ENCODE measurements at regions of chr7 and their contacts with region 1.

Region 1: DNA sequence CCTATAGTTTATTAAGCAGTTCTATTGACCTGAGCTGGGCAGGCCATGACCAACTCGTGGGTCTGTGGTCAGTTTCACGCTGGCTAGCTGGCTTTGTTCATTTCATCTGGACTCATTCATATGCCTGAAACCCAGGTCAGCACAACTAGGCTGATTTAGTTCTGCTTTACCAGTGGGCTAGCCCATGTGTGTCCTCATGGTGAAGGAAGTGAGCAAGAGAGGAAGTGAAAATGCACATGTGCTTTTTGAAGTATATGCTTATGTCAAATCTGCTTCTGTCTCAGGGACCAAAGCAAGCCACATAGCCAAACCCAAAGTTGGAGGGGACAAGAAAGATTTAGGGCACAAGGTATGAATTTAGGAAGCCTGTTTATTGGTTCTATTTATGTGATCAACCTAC is 154.5 kb downstream of the RNF133 start:
- DNase-seq: peak; percentile 49
- ATAC-seq: peak; percentile 99
- H3K4me3 ChIP-seq: no peak overlapping the region
- H3K27ac ChIP-seq: no peak overlapping the region
- H3K4me1 ChIP-seq: peaks cover 2% of the 10 kb centered on the region; the same call in 1 of the 2 replicates
- H3K27me3 ChIP-seq: no peaks in the 10 kb centered on the region
- CTCF ChIP-seq: no peak
- EP300 ChIP-seq: peak in 1 of 2 experiments; percentile 81; a peak in 2 of 4 replicates
- POLR2A ChIP-seq: no peak
- RAD21 ChIP-seq: no peak

Region 2: DNA sequence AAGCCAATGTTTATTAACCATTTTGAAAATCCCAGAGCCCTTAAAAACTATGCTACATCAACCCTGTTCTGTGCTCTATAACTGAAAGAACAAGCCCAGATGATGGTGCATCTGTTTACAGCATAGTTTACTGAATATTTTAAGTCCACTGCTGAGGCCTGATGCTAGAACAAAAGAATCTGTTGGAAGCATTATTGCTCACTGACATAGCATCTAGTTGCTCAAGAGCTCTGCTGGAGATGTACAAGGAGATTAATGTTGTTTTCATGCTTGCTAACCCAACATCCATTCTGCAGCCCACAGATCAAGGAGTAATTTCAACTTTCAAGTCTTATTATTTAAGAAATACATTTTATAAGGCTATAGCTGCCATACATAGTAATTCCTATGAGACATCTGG is 58.6 kb before region 1 on chr7:
- CTCF ChIA-PET with region 1: no interaction called
- POLR2A ChIA-PET with region 1: no interaction called
- RAD21 ChIA-PET with region 1: no interaction called
- SMC1A ChIA-PET with region 1: no interaction called
- in situ Hi-C with region 1: no loop called
- intact Hi-C with region 1: no loop called
- DNase-seq: no peak
- ATAC-seq: no peak
- H3K4me3 ChIP-seq: no peak overlapping the region
- H3K27ac ChIP-seq: no peak overlapping the region
- H3K4me1 ChIP-seq: no peaks in the 10 kb centered on the region
- H3K27me3 ChIP-seq: no peaks in the 10 kb centered on the region
- CTCF ChIP-seq: no peak
- EP300 ChIP-seq: no peak
- POLR2A ChIP-seq: no peak
- RAD21 ChIP-seq: no peak

Region 3: DNA sequence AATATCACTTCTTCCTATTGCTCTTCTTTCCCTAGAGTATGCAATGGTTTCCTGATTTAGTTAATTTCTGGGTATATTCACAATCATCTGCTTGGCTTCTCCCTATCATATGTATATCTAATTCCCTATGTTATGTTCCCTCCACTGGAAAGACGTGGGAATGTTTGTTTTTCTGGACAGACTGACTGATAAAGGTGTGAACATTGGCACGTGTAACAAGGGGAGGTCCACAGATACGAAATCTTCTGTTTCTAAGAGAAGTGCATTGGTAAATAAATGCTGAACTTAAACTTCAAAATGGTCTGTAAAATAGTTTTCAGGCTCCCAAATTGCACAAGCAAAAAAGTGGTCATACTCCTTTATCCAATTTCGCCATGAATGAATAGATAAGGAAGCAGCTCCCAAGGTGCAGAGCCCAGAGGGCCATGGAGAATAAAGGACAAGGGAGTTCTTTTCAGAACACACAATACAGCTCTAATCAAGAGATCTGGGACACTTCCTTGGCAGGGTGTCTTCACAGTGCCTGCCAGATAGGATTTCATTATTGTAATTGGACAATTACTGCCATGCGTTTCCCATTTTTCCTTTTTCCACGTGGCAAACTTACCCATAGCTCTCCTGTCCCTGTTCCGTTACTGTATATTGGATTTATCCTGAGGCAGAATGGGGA is 12.5 kb after region 1 on chr7:
- CTCF ChIA-PET with region 1: interaction called, 4 read pairs
- POLR2A ChIA-PET with region 1: no interaction called
- RAD21 ChIA-PET with region 1: interaction called, 12 read pairs
- SMC1A ChIA-PET with region 1: interaction called, 19 read pairs
- in situ Hi-C with region 1: no loop called
- intact Hi-C with region 1: no loop called
- DNase-seq: no peak
- ATAC-seq: no peak
- H3K4me3 ChIP-seq: no peak overlapping the region
- H3K27ac ChIP-seq: no peak overlapping the region
- H3K4me1 ChIP-seq: no peaks in the 10 kb centered on the region
- H3K27me3 ChIP-seq: no peaks in the 10 kb centered on the region; a peak in 1 of 4 replicates
- CTCF ChIP-seq: no peak
- EP300 ChIP-seq: no peak
- POLR2A ChIP-seq: no peak
- RAD21 ChIP-seq: no peak

Region 4: DNA sequence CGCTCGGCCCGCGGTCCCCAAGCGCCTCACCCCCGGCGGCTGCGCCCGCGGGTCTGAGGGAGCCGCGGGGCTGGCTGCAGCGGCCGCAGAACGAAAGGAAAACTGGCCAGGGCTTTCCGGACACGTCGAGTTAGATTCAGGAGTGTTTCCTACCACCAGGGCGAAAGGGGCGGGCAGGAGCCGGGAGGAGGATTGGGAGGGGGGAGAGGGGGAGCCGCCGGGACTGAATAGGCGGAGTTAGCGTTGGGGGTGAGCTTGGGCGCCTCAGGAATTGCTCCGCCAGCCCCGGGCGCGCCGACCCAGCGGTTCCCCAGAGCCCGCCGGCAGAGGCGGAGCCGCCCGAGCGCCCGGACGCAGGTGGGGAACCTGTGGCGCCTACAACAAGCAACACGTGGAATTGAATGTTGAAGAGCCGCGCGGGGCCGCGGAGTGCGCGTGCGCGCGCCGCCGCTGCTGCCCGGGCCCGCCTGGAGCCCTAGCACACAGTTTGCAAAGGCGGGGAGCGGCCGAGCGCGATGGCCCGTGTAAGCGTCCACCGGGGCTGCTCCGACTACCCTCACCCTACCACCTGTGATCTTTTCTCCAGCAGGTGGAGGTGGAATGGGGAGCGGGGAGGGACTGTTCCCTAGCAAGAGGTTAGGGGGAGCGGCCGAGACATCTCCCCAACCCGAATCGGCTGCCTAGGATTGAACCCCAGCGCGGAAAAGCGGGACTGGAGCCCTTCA is 342.1 kb after region 1 on chr7 and contains the start of gene CADPS2:
- CTCF ChIA-PET with region 1: no interaction called
- POLR2A ChIA-PET with region 1: no interaction called
- RAD21 ChIA-PET with region 1: no interaction called
- SMC1A ChIA-PET with region 1: no interaction called
- in situ Hi-C with region 1: no loop called
- intact Hi-C with region 1: loop called (anchors 5 kb)
- DNase-seq: no peak
- ATAC-seq: peak; percentile 81
- H3K4me3 ChIP-seq: peak within 1 kb of the TSS; percentile 58
- H3K27ac ChIP-seq: no peak within 1 kb of the TSS
- H3K4me1 ChIP-seq: no peaks in the 10 kb centered on the region; the same call in 1 of the 2 replicates
- H3K27me3 ChIP-seq: peaks cover 6 to 10% of the 10 kb centered on the region in 2 experiments; a peak in 3 of 4 replicates
- CTCF ChIP-seq: no peak
- EP300 ChIP-seq: no peak
- POLR2A ChIP-seq: no peak
- RAD21 ChIP-seq: no peak
- polyA plus RNA-seq, gene CADPS2: 0.16 TPM

Measured in GM12878 (cell line).